ENCODE measurements at regions of chr2 and their contacts with region 1.

Region 1: DNA sequence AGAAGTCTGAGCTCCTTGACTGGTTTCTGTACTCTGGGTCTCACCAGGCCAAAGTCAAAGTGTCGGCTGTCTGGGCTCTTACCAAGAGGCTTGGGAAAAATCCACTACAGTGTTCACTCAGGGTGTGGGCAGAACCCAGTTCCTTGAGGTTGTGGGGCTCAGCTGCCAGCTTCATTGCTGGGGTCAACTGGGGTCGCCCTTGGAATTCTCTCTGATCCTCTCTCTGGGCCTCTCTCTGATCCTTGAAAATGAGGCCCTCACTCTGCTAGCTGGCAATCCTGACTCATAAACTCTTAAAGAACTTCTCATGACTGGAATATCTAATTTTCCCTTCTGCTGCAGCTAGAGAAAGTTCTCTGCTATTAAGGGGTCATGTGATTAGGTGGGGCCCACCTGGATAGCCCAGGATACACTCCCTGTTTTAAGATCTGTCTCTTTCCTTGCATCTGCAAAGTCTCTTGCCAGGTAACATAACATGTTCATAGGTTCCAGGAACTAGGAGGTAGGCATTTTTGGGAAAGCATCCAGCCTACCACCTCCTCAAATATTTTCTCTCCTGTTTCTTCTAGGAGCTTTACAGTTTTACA is 66.3 kb downstream of the SP110 start:
- DNase-seq: no peak
- ATAC-seq: no peak
- H3K4me3 ChIP-seq: no peak overlapping the region
- H3K4me1 ChIP-seq: no peaks in the 10 kb centered on the region
- CTCF ChIP-seq: no peak

Region 2: DNA sequence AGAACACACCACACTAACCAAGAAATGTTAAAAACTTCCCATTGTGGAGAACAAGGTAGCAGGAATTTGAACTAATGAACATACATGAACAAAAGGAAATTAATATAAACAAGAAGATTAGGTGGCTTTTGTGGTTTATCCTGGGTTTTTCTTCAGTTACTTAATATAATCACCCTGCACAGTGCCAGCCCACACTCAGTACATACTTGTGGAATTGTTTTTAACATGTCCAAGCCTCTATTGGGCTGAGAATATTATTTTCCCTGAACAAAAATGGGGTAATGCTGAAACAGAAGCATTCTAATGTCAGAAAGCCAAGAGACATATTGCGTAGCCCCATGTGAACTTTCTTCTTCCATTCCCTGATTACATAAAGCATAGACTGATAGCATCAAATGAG is 642.0 kb before region 1 on chr2:
- intact Hi-C with region 1: no loop called
- DNase-seq: no peak
- ATAC-seq: no peak
- H3K4me3 ChIP-seq: no peak overlapping the region
- H3K4me1 ChIP-seq: no peaks in the 10 kb centered on the region
- CTCF ChIP-seq: no peak

Region 3: GRCh38 chr2:230018153-230018552 is 135.3 kb before region 1 on chr2:
- intact Hi-C with region 1: loop called (anchors 10 kb)
- DNase-seq: no peak
- ATAC-seq: no peak
- H3K4me3 ChIP-seq: no peak overlapping the region
- H3K4me1 ChIP-seq: no peaks in the 10 kb centered on the region
- CTCF ChIP-seq: no peak

Region 4: DNA sequence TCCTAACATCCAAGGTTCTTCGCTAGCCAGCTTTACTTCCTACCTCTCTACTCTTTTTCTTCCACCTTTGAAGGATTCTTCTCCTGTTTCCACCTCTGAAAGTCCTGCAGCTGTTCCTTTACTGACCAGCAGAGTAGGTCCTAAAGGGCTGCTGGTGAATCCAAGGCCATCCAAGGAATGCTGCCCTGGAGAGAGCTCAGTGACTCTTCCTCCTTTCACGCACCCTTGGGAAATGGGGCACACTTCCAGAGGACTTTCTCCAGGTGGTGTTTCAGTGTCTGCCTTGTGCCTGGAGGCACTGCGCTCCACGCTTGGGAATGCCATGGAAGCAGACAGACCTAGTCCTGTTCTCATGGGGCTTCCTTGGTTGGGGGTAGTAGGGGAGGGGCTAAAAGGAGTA is 130.2 kb before region 1 on chr2:
- intact Hi-C with region 1: loop called (anchors 10 kb)
- DNase-seq: no peak
- ATAC-seq: no peak
- H3K4me3 ChIP-seq: no peak overlapping the region
- H3K4me1 ChIP-seq: no peaks in the 10 kb centered on the region
- CTCF ChIP-seq: no peak